ENCODE measurements at regions of chr1 and their contacts with region 1.

Region 1: DNA sequence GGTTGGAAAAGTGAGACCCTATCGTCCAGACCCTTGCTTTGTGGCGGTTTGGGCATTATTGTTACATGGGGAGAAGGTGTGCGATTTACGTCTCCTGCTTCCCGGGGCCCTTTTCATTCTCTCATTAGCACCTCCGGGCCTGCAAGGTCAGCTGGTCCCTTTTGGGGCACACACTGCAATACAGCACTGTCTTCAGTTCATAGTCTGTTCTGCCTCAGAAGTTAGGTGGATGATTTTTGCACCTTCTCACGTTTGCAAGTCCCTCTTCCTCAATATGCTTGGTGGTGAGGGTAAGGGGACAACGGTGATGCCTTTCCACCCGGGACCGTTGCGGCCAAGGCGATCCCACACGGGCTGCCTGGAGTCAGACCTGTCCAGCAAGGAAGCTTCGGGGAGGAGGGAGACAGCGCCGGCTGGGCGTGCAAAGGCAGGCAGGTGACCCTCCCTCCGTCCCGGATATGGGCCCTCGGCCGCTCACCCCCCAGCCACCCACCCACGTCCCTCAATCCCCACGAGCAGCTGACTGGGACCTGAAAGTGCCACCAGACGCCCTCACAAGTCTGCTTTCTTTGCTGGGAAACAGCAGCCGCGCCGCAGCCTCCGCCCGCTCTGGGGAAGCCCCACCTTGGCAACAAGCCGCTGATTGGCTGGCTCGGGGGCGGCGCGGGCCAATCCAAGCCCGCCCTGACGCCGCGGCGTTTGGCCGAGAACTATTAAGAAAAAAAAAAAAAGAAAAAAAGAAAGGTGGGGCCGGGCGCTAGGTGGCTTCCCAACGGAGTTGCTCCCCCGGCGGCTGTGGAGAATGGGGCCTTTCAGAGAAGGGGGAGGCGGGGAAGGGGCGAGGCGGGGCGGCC is 21.7 kb downstream of the BTG2 start:
- DNase-seq: peak; percentile 91 to 95
- H3K4me3 ChIP-seq: peak overlapping the region; percentile 53
- H3K4me3 Mint-ChIP-seq: peak overlapping the region; percentile 85
- H3K27ac Mint-ChIP-seq: peak overlapping the region; percentile 92
- H3K4me1 ChIP-seq: peaks cover 13% of the 10 kb centered on the region; the same call in 1 of the 2 replicates
- H3K4me1 Mint-ChIP-seq: peaks cover 9% of the 10 kb centered on the region
- H3K27me3 ChIP-seq: no peaks in the 10 kb centered on the region
- H3K27me3 Mint-ChIP-seq: peaks cover 6% of the 10 kb centered on the region
- CTCF ChIP-seq: peak in 1 of 2 experiments; percentile 39

Region 2: DNA sequence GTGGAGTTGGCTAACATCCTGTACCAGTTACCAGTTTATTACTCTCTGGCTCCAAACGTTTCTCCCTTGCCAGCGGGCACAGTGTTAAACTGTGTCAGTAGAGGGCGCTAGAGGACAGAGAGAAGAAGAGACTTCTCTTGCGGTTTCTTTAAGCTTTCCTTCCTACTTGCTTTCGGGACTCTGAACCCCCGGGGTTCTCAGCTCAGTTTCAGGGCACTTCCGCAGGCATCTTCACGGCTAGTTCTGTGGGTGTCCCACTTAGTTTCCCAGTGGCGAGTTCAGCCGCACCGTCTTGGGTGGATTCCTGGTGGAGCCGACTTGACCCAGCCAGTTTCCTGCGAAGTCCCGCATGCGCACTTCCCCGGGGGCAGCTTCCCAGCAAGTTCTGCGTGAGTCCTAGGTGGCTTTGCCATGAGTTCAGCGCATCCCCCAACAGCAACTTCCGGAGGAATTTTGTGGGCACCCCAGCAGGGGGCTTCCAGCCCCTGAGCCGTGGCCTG is 59.7 kb before region 1 on chr1:
- CTCF ChIA-PET with region 1: interaction called, 61 read pairs
- POLR2A ChIA-PET with region 1: no interaction called
- intact Hi-C with region 1: no loop called
- DNase-seq: peak; percentile 73 to 78
- H3K4me3 ChIP-seq: no peak overlapping the region
- H3K4me3 Mint-ChIP-seq: no peak overlapping the region
- H3K27ac Mint-ChIP-seq: no peak overlapping the region
- H3K4me1 ChIP-seq: peaks cover 6% of the 10 kb centered on the region; the same call in 1 of the 2 replicates
- H3K4me1 Mint-ChIP-seq: peaks cover 12% of the 10 kb centered on the region
- H3K27me3 ChIP-seq: no peaks in the 10 kb centered on the region
- H3K27me3 Mint-ChIP-seq: no peaks in the 10 kb centered on the region
- CTCF ChIP-seq: peak; percentile 80 to 83

Region 3: DNA sequence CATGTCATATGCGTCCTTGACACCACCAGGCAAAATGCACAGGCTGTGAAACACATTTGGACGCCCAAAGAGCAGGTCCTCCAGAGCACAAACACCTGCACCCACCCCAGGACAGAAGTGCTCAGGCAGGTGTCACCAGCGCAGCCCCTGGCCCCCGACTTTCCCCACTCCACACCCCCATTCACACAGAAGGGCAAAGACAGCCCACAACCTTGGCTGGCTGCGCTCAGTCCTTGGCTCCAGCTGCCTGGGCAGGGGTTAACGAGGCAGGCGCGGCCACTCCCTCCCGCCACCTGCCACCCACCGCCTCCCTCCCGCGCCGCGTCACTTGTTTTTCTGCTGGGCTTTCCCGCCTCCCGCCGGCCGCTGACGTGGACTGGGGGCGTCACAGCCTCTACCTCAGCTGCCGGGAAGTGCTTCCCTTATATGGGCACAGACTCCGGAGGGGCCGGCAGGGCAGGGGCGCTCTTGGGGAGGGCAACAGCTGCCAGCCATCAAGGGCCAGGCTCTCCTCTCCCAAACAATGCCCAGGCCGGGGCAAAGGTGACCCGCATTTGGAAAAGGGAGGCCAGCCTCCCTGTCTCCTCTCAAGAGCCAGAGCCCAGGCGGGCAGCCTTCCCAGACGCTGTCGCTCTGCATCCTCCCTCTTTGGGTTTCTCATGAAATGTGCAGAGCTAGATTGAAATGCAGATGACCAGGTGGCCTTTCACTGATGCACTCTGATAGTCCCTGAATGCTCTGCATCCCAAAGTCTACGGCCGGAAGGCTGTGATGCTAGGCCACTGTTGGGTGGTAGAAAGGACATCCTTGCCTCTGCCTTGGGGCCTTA is 36.6 kb before region 1 on chr1:
- CTCF ChIA-PET with region 1: interaction called, 12 read pairs
- POLR2A ChIA-PET with region 1: interaction called, 20 read pairs
- intact Hi-C with region 1: loop called (anchors 1 kb)
- DNase-seq: peak; percentile 96 to 97
- H3K4me3 ChIP-seq: peak overlapping the region; percentile 32
- H3K4me3 Mint-ChIP-seq: peak overlapping the region; percentile 70
- H3K27ac Mint-ChIP-seq: peak overlapping the region; percentile 94
- H3K4me1 ChIP-seq: peaks cover 41% of the 10 kb centered on the region
- H3K4me1 Mint-ChIP-seq: peaks cover 30% of the 10 kb centered on the region
- H3K27me3 ChIP-seq: no peaks in the 10 kb centered on the region
- H3K27me3 Mint-ChIP-seq: no peaks in the 10 kb centered on the region
- CTCF ChIP-seq: no peak

Region 4: GRCh38 chr1:203311368-203312301 is 15.4 kb before region 1 on chr1:
- CTCF ChIA-PET with region 1: interaction called, 19 read pairs
- POLR2A ChIA-PET with region 1: interaction called, 15 read pairs
- intact Hi-C with region 1: no loop called
- DNase-seq: no peak
- H3K4me3 ChIP-seq: no peak overlapping the region
- H3K4me3 Mint-ChIP-seq: no peak overlapping the region
- H3K27ac Mint-ChIP-seq: no peak overlapping the region
- H3K4me1 ChIP-seq: peaks cover 12% of the 10 kb centered on the region
- H3K4me1 Mint-ChIP-seq: peaks cover 16% of the 10 kb centered on the region
- H3K27me3 ChIP-seq: no peaks in the 10 kb centered on the region
- H3K27me3 Mint-ChIP-seq: no peaks in the 10 kb centered on the region
- CTCF ChIP-seq: no peak

Region 5: DNA sequence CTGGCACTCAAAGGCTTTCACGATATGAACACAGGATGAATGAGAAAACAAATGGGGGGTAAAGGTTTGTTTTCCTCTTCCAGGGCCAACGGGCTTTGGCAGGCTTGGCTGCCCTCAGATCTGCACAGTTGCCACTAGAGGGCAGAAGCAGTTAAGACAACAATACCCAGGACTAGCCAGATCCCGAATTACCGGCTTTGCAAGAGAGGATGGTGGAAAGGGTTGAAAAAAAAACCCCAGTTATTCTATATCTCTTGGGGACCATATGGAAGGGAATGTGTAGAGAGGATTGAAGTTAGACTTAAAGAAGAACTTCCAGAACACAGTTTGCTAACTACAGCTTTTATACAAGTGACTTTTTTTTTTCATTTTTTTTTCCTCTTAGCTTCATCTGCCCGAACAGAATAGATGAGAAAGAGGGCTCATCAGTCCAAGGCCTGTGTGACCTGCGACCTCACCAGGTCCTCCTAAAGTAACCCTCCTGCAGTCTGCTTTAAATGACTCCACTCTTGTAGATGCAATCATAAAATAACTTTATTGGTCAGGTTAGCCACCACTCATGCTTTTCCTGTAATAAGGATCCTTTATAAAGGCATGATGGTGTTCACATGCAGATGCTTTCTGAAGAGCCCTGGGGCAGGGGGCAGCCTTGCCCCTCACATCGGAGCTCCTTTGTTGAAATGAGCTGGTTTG is 13.2 kb after region 1 on chr1:
- CTCF ChIA-PET with region 1: interaction called, 16 read pairs
- POLR2A ChIA-PET with region 1: interaction called, 4 read pairs
- intact Hi-C with region 1: no loop called
- DNase-seq: peak; percentile 81 to 83
- H3K4me3 ChIP-seq: no peak overlapping the region
- H3K4me3 Mint-ChIP-seq: no peak overlapping the region
- H3K27ac Mint-ChIP-seq: no peak overlapping the region
- H3K4me1 ChIP-seq: peaks cover 5% of the 10 kb centered on the region; the same call in 1 of the 2 replicates
- H3K4me1 Mint-ChIP-seq: peaks cover 6% of the 10 kb centered on the region
- H3K27me3 ChIP-seq: no peaks in the 10 kb centered on the region
- H3K27me3 Mint-ChIP-seq: no peaks in the 10 kb centered on the region
- CTCF ChIP-seq: peak; percentile 90

Region 6: DNA sequence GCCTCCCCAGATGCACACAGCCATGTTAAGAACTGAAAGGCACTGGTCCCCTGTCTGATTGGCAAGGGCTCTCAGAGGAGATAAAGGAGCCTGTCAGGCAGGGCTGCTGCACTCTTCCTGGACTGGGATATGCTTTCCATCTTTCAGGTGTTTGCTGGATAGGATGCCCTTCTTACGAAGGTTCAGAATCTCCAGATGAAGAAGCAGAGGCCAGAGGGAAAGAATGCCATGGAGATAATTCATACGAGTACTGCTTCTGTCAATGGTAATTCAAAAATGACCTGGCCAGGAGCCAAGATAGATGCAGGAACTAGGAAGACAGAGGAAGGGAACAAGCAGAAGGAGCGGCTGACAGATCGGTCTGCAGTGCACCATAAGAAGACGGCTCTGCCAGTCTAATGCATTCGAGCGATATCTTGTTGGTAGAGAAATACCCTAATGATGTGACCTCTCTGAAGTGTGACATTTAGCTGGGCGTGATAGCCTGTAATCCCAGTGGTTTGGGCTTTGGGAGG is 283.0 kb after region 1 on chr1:
- CTCF ChIA-PET with region 1: no interaction called
- POLR2A ChIA-PET with region 1: no interaction called
- intact Hi-C with region 1: no loop called
- DNase-seq: no peak
- H3K4me3 ChIP-seq: no peak overlapping the region
- H3K4me3 Mint-ChIP-seq: no peak overlapping the region
- H3K27ac Mint-ChIP-seq: no peak overlapping the region
- H3K4me1 ChIP-seq: no peaks in the 10 kb centered on the region
- H3K4me1 Mint-ChIP-seq: no peaks in the 10 kb centered on the region
- H3K27me3 ChIP-seq: no peaks in the 10 kb centered on the region
- H3K27me3 Mint-ChIP-seq: no peaks in the 10 kb centered on the region
- CTCF ChIP-seq: no peak

Measured in Caco-2 (cell line).